ENCODE measurements at regions of chr6 and their contacts with region 1.

Region 1: DNA sequence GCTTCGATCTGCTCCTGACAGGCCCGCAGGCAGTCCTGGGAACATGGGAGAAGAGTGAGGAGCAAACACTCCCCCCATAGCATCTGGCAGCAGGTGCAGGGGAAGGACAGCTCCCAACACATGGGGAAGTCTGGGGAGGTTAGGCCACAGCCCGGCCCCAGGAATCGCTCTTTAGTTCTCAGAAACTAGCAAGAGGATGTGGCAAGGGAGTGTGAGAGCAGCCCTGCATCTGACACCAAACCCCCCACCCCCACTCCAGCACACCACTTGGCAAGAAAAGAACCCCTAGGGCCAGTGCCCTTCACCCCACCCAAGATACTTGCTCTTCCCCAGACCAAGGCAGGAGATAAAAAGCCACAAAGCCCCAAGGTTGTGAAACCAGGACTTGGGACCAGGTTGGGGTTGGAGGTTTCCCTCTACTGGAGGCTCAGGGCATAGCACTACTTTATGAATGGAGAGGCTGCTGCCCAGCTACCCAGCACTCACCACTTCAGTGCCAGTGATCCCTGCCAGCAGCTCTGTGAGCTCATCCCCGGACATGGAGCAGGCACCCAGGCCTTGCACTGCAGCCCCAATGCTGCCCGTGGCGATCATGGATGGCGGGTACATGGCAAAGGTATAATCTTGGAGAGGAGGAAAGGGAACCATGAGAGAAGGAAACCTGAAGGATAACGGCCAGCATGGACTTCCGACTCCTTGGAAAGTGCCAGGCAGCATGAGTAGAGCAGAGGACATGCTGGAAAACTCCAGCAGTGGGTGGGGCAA is 5.4 kb downstream of the CCND3 start:
- DNase-seq: peak; percentile 83
- H3K4me3 ChIP-seq: peak overlapping the region in 1 of 2 experiments; percentile 14; a peak in 1 of 4 replicates
- H3K27ac ChIP-seq: peak overlapping the region; percentile 46 to 50; a peak in 3 of 4 replicates
- H3K4me1 ChIP-seq: peaks cover 19 to 22% of the 10 kb centered on the region in 2 experiments; a peak in 3 of 4 replicates
- H3K27me3 ChIP-seq: no peaks in the 10 kb centered on the region
- CTCF ChIP-seq: peak; percentile 79
- EP300 ChIP-seq: no peak
- RAD21 ChIP-seq: peak; percentile 72

Region 2: DNA sequence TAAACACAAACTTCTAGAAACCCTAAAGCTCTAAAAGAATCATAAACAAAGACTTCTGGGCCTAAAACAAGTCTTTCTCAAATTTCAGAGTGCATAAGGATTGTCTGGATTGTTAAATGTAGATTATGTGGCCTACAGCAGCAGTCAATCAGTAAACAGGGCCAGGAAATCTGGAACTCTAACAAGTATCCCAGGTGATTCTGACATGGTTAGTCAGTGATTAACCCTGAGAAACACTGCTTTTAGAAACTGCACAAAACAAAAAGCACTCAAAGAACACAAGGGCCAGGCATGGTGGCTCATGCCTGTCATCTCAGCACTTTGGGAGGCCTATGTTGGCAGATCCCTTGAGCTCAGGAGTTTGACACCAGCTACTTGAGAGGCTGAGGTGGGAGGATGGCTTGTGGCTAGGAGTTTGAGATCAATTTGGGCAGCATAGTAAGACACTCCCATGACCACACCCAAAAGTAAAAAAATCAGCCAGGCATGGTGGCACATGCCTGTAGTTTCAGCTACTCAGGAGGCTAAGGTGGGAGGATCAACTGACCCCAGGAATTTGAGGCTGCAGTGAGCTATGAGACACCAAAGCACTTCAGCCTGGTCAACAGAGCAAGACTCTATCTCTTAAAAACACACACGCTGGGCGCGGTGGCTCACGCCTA is 21.3 kb before region 1 on chr6:
- CTCF ChIA-PET with region 1: interaction called, 70 read pairs
- POLR2A ChIA-PET with region 1: no interaction called
- DNase-seq: no peak
- H3K4me3 ChIP-seq: no peak overlapping the region
- H3K27ac ChIP-seq: no peak overlapping the region
- H3K4me1 ChIP-seq: peaks cover 6 to 7% of the 10 kb centered on the region in 2 experiments; a peak in 3 of 4 replicates
- H3K27me3 ChIP-seq: no peaks in the 10 kb centered on the region
- CTCF ChIP-seq: no peak
- EP300 ChIP-seq: no peak
- RAD21 ChIP-seq: no peak

Measured in SK-N-SH (cell line).